GM12878 (cell line): ENCODE measurements at regions of chr10 and their contacts with region 1.

Region 1: GRCh38 chr10:68315582-68315981 is 16.3 kb upstream of the HNRNPH3 start:
- DNase-seq: no peak
- ATAC-seq: no peak
- H3K4me3 ChIP-seq: no peak overlapping the region
- H3K27ac ChIP-seq: no peak overlapping the region; the same call in 1 of the 2 replicates
- H3K4me1 ChIP-seq: no peaks in the 10 kb centered on the region
- H3K27me3 ChIP-seq: no peaks in the 10 kb centered on the region
- CTCF ChIP-seq: no peak
- EP300 ChIP-seq: no peak
- POLR2A ChIP-seq: no peak
- RAD21 ChIP-seq: no peak

Region 2: DNA sequence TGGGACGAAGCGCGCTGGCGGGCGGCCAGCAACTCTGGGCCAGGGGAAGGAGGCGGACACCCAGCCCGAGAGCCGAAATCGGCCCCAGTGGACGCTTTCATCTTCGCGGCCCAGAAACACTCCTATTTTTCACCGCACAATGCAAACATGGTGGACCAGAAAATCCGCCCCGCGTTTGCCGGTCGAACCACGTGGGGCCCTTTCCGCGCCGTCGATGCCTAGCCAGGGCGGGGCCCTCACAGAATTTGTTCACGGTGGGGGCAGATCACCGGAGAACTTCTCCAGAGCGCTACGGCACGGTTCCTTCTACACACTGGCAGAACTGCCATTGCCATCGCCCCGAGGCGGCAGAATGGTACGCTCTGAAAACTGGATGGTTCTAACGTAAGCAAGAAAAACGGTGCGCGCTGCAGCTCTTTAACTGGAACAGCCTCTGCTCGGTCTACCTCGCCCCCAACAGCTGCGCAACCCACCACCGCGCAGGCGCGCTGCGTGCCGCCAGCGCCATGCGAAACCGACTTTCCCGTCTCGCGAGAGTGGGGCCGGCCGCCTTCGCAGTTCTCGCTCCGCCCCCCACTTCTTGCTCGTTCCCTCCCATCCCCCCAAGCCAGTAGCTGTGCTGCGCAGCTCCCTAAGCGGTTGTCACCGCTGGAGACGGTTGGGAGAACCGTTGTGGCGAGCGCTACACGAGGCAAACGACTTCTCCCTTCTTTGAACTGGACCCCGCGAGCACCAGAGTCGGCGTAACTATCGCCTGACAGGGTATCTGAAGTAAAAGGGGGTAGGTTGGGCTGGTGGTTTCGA is 16.1 kb after region 1 on chr10 and contains the start of gene HNRNPH3:
- CTCF ChIA-PET with region 1: no interaction called
- POLR2A ChIA-PET with region 1: interaction called, 37 read pairs
- RAD21 ChIA-PET with region 1: interaction called, 3 read pairs
- SMC1A ChIA-PET with region 1: interaction called, 8 read pairs
- in situ Hi-C with region 1: no loop called
- intact Hi-C with region 1: no loop called
- DNase-seq: peak; percentile 93
- ATAC-seq: peak; percentile 80
- H3K4me3 ChIP-seq: peak within 1 kb of the TSS; percentile 99
- H3K27ac ChIP-seq: peak within 1 kb of the TSS; percentile 99
- H3K4me1 ChIP-seq: no peaks in the 10 kb centered on the region; the same call in 1 of the 2 replicates
- H3K27me3 ChIP-seq: no peaks in the 10 kb centered on the region
- CTCF ChIP-seq: no peak
- EP300 ChIP-seq: peak in 1 of 2 experiments; percentile 37; a peak in 1 of 4 replicates
- POLR2A ChIP-seq: peak; percentile 98
- RAD21 ChIP-seq: no peak
- polyA plus RNA-seq, gene HNRNPH3: 76.0 to 98.7 TPM